Natural killer cell (primary cell): ENCODE measurements at regions of chr13 and their contacts with region 1.

Region 1: GRCh38 chr13:48647630-48648029 is 6.1 kb upstream of the CYSLTR2 start:
- DNase-seq: no peak
- ATAC-seq: no peak
- H3K4me3 ChIP-seq: no peak overlapping the region
- H3K4me3 Mint-ChIP-seq: no peak overlapping the region
- H3K27ac ChIP-seq: no peak overlapping the region
- H3K27ac Mint-ChIP-seq: no peak overlapping the region
- H3K4me1 ChIP-seq: no peaks in the 10 kb centered on the region
- H3K4me1 Mint-ChIP-seq: peaks cover 1 to 6% of the 10 kb centered on the region in 2 donors
- H3K27me3 ChIP-seq: no peaks in the 10 kb centered on the region
- H3K27me3 Mint-ChIP-seq: peaks cover 3 to 10% of the 10 kb centered on the region in 2 donors
- CTCF ChIP-seq: no peak

Region 2: DNA sequence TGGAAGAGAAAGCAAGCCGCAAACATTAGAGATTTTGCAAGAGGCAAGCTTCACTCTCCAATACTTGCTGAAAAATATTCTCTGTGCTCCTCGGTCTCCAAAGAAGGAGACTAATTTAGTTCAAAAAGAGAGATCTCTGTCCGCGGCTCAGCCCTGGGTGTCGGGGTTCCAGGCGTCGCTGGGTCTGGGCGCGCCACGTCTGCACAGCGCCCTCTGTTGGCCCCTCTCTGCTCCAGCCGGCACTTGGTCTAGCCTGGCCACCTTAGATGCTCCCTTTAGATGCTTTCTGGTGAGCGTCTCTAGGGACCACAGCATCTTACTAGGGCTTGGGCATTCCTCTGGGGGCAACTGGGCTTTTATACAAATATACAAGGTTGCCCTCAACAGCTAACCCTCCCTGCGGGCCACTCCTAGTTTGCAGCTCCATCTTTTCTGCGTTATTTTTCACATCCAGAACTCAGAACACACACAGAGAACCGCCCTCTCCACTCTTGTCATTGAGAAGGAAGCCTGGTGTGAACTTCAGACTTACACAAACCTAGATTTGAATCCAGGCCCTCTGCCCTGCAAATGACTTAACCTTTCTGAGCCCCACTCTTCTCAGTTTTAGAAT is 84.4 kb after region 1 on chr13:
- intact Hi-C with region 1: loop called (anchors 10 kb)
- DNase-seq: peak; percentile 51 to 78
- ATAC-seq: peak; percentile 84 to 98 (median 92)
- H3K4me3 ChIP-seq: no peak overlapping the region
- H3K4me3 Mint-ChIP-seq: peak overlapping the region; percentile 81
- H3K27ac ChIP-seq: no peak overlapping the region
- H3K27ac Mint-ChIP-seq: peak overlapping the region in 1 of 2 donors; percentile 39
- H3K4me1 ChIP-seq: peaks cover 4% of the 10 kb centered on the region
- H3K4me1 Mint-ChIP-seq: peaks cover 9 to 10% of the 10 kb centered on the region in 2 donors
- H3K27me3 ChIP-seq: no peaks in the 10 kb centered on the region
- H3K27me3 Mint-ChIP-seq: peaks cover 0 to 6% of the 10 kb centered on the region in 2 donors
- CTCF ChIP-seq: peak; percentile 82

Region 3: DNA sequence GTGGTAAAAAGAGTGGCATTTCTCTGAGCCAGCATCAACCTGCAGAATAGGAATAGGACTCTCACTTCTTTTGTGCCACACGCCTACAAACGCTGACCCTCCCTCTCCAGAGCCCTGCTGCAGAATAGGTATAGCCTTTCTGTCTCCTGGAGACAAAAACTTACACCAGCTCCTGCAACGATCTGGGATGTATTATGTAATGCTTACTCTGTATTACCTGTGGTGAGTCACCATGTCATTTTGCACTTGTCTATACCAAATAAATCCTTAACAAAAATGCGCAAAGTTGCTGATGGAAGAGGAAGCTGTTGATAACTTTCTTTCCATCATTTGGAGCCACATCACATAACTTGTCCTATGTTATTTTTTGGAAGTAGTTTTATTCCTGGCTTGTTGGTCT is 172.3 kb after region 1 on chr13:
- intact Hi-C with region 1: no loop called
- DNase-seq: no peak
- ATAC-seq: no peak
- H3K4me3 ChIP-seq: no peak overlapping the region
- H3K4me3 Mint-ChIP-seq: no peak overlapping the region
- H3K27ac ChIP-seq: no peak overlapping the region
- H3K27ac Mint-ChIP-seq: no peak overlapping the region
- H3K4me1 ChIP-seq: no peaks in the 10 kb centered on the region
- H3K4me1 Mint-ChIP-seq: peaks cover 11% of the 10 kb centered on the region in 2 donors
- H3K27me3 ChIP-seq: no peaks in the 10 kb centered on the region
- H3K27me3 Mint-ChIP-seq: peaks cover 0 to 6% of the 10 kb centered on the region in 2 donors
- CTCF ChIP-seq: no peak